ENCODE measurements at regions of chr2 and their contacts with region 1.

Region 1: GRCh38 chr2:11203480-11203879 is 48.2 kb downstream of the SLC66A3 start:
- DNase-seq: peak; percentile 96
- ATAC-seq: peak; percentile 94
- H3K4me3 ChIP-seq: no peak overlapping the region
- H3K27ac ChIP-seq: peak overlapping the region; percentile 67
- H3K4me1 ChIP-seq: peaks cover 24% of the 10 kb centered on the region
- H3K27me3 ChIP-seq: no peaks in the 10 kb centered on the region
- CTCF ChIP-seq: no peak

Region 2: GRCh38 chr2:10787176-10787968 is 416.1 kb before region 1 on chr2:
- CTCF ChIA-PET with region 1: no interaction called
- POLR2A ChIA-PET with region 1: no interaction called
- intact Hi-C with region 1: no loop called
- DNase-seq: no peak
- ATAC-seq: no peak
- H3K4me3 ChIP-seq: no peak overlapping the region
- H3K27ac ChIP-seq: no peak overlapping the region
- H3K4me1 ChIP-seq: peaks cover 15% of the 10 kb centered on the region
- H3K27me3 ChIP-seq: no peaks in the 10 kb centered on the region
- CTCF ChIP-seq: peak; percentile 62

Region 3: DNA sequence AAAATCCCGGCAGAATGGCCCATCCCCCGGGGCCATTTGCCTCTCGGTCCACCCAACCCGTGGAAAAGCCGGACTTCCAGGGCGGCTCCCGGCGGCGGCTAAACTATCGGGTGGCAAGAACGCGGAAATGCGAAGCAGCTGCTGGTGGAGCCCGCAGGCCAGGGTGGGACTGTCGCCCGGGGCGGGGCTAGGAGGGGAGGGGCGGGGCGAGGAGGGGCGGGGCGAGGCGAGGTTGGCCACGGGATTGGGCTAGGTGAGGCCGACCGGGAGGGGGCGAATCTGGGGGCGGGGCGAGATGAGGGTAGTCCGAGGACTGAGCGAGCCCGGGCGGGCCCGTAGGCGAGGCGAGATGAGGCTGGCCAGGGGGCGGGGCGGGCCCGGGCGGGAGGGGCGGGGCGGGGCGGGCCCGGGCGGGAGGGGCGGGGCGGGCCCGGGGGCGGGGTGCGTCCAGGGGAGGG is 48.5 kb before region 1 on chr2:
- CTCF ChIA-PET with region 1: no interaction called
- POLR2A ChIA-PET with region 1: no interaction called
- intact Hi-C with region 1: loop called (anchors 2 kb)
- DNase-seq: peak; percentile 91
- ATAC-seq: peak; percentile 84
- H3K4me3 ChIP-seq: peak overlapping the region; percentile 68
- H3K27ac ChIP-seq: peak overlapping the region; percentile 83
- H3K4me1 ChIP-seq: peaks cover 12% of the 10 kb centered on the region
- H3K27me3 ChIP-seq: no peaks in the 10 kb centered on the region
- CTCF ChIP-seq: no peak

Region 4: DNA sequence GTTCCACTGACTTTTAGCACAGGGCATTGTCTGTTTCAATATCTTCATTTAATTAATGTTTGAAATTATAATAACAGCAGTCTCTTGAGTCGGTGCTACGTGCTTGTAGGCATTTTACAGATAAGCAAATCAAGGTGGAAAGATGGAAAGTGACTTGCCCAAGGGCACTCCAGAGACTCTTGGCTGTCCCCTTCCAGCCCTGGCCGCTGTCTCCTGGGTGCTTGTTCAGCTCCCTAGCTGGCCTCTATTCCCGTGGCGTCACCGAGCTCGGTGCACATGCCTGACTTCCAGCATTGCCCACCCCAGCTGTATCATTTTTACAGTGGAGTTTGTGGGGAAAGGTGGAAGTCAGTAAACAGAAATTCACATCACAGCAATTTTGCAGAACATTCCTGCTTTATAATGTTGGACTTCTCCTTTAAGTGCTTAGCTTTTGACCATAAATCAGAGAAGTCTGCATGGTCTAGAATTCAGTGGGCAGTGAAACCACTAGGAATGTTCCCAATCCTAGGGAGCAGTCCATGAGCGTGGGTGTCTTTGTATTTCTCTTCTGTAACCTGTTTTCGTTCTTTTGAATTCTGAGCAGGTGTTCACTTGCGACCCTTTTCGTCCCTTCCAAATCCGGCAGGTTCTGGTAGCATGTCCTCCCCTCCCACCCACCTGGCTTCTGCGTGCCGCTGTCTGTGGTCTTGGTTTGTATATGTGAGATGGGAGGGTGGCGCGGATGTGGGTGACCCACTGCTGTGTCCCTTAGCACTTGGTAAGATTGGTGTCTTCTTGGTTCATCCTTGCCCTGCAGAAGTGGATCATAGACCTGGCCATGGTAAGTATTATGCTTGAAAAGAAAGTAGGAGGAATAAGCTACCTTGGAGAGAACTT is 39.8 kb before region 1 on chr2:
- CTCF ChIA-PET with region 1: interaction called, 14 read pairs
- POLR2A ChIA-PET with region 1: no interaction called
- intact Hi-C with region 1: no loop called
- DNase-seq: no peak
- ATAC-seq: no peak
- H3K4me3 ChIP-seq: no peak overlapping the region
- H3K27ac ChIP-seq: no peak overlapping the region
- H3K4me1 ChIP-seq: no peaks in the 10 kb centered on the region
- H3K27me3 ChIP-seq: no peaks in the 10 kb centered on the region
- CTCF ChIP-seq: no peak

Region 5: GRCh38 chr2:11598228-11598731 is 394.8 kb after region 1 on chr2:
- CTCF ChIA-PET with region 1: no interaction called
- POLR2A ChIA-PET with region 1: no interaction called
- intact Hi-C with region 1: no loop called
- DNase-seq: peak; percentile 64
- ATAC-seq: peak; percentile 88
- H3K4me3 ChIP-seq: no peak overlapping the region
- H3K27ac ChIP-seq: no peak overlapping the region
- H3K4me1 ChIP-seq: peaks cover 12% of the 10 kb centered on the region
- H3K27me3 ChIP-seq: no peaks in the 10 kb centered on the region
- CTCF ChIP-seq: no peak